BJ (cell line): ENCODE measurements at regions of chr20 and their contacts with region 1.

Region 1: DNA sequence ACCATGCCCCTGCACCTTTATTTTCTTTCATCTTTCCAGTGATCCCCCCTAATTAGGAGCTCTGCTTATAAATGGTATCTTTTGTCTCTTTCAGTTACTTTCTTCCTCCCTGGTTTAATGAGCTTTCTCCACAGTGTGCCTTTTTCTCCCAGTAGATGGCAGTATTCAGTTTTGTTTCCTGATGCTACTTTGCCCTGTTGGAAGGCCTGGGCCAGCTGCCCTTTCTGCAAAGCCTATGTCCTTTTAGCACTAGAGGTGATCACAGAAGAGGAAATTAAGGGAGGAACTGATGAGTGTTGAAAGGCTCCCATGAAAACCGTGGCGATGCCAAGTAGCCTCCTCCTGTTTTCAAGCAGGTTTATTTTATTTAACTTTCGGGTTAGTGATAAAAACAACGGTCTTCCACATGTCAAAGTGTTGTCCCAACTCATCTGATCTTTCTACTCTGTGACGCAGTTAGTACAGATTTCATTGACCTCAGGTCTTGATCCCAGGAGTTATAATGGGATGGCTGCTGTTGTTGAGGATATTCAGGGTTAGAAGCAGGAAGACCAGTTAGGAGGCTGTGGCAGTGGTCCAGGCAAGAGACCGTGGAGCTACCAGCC is 184.2 kb upstream of the BMP2 start:
- DNase-seq: no peak
- H3K4me3 ChIP-seq: no peak overlapping the region
- H3K27me3 ChIP-seq: no peaks in the 10 kb centered on the region
- CTCF ChIP-seq: peak; percentile 72

Region 2: DNA sequence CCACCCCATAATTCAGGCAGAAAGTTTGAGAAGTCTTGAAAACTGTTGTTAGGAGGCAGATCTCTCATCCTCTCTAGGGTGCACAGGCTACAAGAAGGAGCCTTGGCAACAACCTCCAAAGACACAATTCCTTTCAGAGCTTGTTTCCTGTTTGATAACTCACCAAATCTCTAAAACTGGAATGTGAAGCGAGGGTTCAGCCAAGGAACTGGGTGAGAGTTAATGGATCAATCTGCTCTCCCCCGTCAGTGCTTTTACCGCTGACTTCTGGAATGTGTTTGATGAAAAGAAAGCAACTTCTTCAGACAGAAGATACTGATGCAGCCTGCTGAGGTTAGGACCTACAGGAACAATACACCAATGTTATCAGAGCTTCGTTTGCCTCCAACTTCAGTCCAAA is 12.5 kb after region 1 on chr20:
- CTCF ChIA-PET with region 1: interaction called, 32 read pairs
- POLR2A ChIA-PET with region 1: no interaction called
- DNase-seq: no peak
- H3K4me3 ChIP-seq: no peak overlapping the region
- H3K27me3 ChIP-seq: 0 out of 2 replicates have a peak, but pooled peaks cover 2% of the 10 kb centered on the region
- CTCF ChIP-seq: no peak